Left cardiac atrium (tissue), 4 donors: ENCODE measurements at regions of chr16 and their contacts with region 1.

Region 1: GRCh38 chr16:83068686-83069085 is 441.9 kb downstream of the CDH13 start:
- DNase-seq: no peak
- ATAC-seq: peak in 1 of 2 donors; percentile 68

Region 2: GRCh38 chr16:82748026-82748425 is 320.7 kb before region 1 on chr16:
- intact Hi-C with region 1: loop called in 1 of 2 experiments (anchors 5 kb)
- DNase-seq: peak; percentile 64
- ATAC-seq: peak; percentile 59 to 68

Region 3: GRCh38 chr16:82824408-82824807 is 244.3 kb before region 1 on chr16:
- intact Hi-C with region 1: no loop called
- DNase-seq: no peak
- ATAC-seq: no peak